ENCODE measurements at regions of chr7 and their contacts with region 1.

Region 1: GRCh38 chr7:128862571-128863432 is at the start of gene ATP6V1F:
- DNase-seq: peak; percentile 96 to 98
- H3K4me3 ChIP-seq: peak within 1 kb of the TSS; percentile 51 to 99 (median 64)
- H3K27ac ChIP-seq: peak within 1 kb of the TSS in 2 of 3 donors; percentile 9 to 62
- H3K4me1 ChIP-seq: peaks cover 10 to 22% of the 10 kb centered on the region in 2 donors
- H3K27me3 ChIP-seq: no peaks in the 10 kb centered on the region
- CTCF ChIP-seq: peak in 1 of 6 experiments; percentile 25
- POLR2A ChIP-seq: peak in 1 of 2 donors; percentile 85
- total RNA-seq, gene ATP6V1F: 49.6 to 109 (median 86.6) TPM

Region 2: GRCh38 chr7:128739048-128739962 is 123.5 kb before region 1 on chr7 and contains the start of gene CALU:
- intact Hi-C with region 1: loop called (anchors 10 kb)
- DNase-seq: peak; percentile 98 to 99
- H3K4me3 ChIP-seq: peak within 1 kb of the TSS; percentile 84 to 96 (median 91)
- H3K27ac ChIP-seq: peak within 1 kb of the TSS; percentile 76 to 90 (median 90)
- H3K4me1 ChIP-seq: peaks cover 19 to 27% of the 10 kb centered on the region in 2 donors
- H3K27me3 ChIP-seq: no peaks in the 10 kb centered on the region
- CTCF ChIP-seq: no peak
- POLR2A ChIP-seq: peak; percentile 18 to 93
- total RNA-seq, gene CALU: 115 to 143 (median 132) TPM

Region 3: GRCh38 chr7:129054438-129055293 is 191.9 kb after region 1 on chr7 and contains the start of gene TNPO3:
- intact Hi-C with region 1: no loop called
- DNase-seq: peak; percentile 94 to 96
- H3K4me3 ChIP-seq: peak within 1 kb of the TSS; percentile 64 to 83 (median 71)
- H3K27ac ChIP-seq: peak within 1 kb of the TSS; percentile 89 to 99 (median 98)
- H3K4me1 ChIP-seq: peaks cover 17 to 29% of the 10 kb centered on the region in 2 donors
- H3K27me3 ChIP-seq: no peaks in the 10 kb centered on the region
- CTCF ChIP-seq: no peak
- POLR2A ChIP-seq: peak in 1 of 2 donors; percentile 92
- total RNA-seq, gene TNPO3: 46.1 to 56.2 (median 51.8) TPM